ENCODE measurements at regions of chr1 and their contacts with region 1.

Region 1: GRCh38 chr1:109910123-109910962 is at the start of gene CSF1:
- DNase-seq: peak; percentile 45
- H3K4me3 Mint-ChIP-seq: peak within 1 kb of the TSS; percentile 77
- H3K27ac Mint-ChIP-seq: peak within 1 kb of the TSS; percentile 74
- H3K4me1 Mint-ChIP-seq: peaks cover 15% of the 10 kb centered on the region
- H3K27me3 Mint-ChIP-seq: peaks cover 41% of the 10 kb centered on the region
- CTCF ChIP-seq: no peak
- total RNA-seq, gene CSF1: 10.8 and 11.1 TPM in 2 replicates

Region 2: DNA sequence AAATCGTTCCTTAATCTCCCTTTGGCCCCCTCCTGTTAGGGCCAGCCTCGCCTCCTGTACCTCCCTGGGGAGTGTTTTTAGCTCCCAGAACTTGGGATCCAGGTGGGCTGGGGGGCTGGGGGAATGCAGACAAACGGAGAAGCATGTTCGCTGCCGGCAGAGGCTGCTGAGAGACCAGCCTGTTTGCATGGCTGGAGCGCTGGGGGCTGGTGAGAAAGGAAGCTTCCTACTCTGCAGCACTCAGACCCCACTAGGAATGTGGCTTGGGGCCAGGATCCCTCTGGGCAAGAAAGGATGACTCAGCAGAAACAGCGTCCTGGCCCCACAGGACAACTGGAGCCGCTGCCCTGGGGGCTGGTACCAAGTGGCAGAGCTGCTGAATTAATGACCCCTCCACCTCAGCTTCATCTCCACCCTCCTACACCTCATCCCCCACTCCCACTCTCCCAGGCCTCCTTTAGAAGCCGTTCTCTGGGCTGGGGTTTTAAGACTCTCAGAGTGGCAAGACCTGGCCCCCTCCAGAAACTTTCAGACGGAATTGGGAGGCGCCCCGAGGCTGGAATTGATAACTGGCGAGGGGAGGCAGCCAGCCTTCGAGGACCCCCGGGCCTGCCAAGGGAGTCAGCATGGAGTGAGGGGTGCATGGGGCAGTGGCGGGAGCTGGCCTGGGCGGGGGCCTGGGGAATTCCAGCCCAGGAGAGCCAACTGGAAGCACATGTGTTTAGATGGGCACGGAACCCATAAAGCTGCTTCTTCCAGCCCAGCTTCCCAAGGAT is 118.1 kb before region 1 on chr1:
- CTCF ChIA-PET with region 1: no interaction called
- intact Hi-C with region 1: loop called (anchors 10 kb)
- DNase-seq: peak; percentile 59
- H3K4me3 Mint-ChIP-seq: no peak overlapping the region
- H3K27ac Mint-ChIP-seq: no peak overlapping the region
- H3K4me1 Mint-ChIP-seq: peaks cover 41% of the 10 kb centered on the region
- H3K27me3 Mint-ChIP-seq: no peaks in the 10 kb centered on the region
- CTCF ChIP-seq: no peak

Region 3: DNA sequence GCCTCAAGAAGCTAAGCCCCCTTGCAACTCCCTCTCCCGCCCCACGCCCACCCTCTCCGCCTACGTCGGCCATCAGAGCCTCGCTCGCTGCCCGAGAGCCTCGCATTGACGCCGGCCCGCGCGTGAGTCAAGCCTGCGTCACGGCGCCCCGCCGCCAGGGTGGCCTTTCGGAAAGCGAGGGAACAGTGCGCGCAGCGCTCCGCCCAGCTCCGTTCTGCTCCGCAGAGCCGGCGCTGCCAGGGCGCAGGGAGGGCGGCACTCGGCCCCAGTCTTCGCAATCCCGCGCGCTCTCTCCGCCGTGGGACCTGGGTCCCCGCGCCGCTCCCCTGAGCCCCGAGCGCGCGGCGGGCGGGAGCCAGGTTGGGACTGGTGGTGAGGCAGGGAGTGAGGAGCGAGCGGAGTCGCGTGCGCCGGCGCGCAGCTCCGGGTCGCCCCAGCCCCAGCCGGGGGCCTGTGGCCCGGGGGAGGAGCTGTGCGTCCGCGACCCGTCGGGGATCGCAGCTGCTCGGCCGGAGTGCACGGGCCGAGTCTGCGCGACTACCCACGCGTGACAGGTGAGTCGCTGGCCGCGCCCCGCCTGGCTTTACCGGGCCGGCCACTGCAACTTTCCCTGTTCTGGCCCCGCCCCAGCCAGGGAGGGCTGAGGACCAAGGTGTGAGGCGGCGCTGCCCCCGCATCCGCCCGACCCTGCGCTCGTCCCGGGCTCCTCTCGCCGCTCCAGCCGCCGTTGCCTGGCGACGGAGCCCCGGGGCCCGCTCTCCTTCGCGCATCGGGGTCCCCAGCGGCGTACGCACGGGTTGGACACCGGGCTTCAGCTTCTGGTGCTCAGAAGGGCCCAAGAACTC is 240.2 kb after region 1 on chr1 and contains the start of gene SLC6A17:
- CTCF ChIA-PET with region 1: no interaction called
- intact Hi-C with region 1: no loop called
- DNase-seq: peak; percentile 47
- H3K4me3 Mint-ChIP-seq: no peak within 1 kb of the TSS
- H3K27ac Mint-ChIP-seq: no peak within 1 kb of the TSS
- H3K4me1 Mint-ChIP-seq: no peaks in the 10 kb centered on the region
- H3K27me3 Mint-ChIP-seq: peaks cover 38% of the 10 kb centered on the region
- CTCF ChIP-seq: no peak
- total RNA-seq, gene SLC6A17: 0.20 and 0.24 TPM in 2 replicates